Breast epithelium (tissue), 4 donors: ENCODE measurements at regions of chr3 and their contacts with region 1.

Region 1: DNA sequence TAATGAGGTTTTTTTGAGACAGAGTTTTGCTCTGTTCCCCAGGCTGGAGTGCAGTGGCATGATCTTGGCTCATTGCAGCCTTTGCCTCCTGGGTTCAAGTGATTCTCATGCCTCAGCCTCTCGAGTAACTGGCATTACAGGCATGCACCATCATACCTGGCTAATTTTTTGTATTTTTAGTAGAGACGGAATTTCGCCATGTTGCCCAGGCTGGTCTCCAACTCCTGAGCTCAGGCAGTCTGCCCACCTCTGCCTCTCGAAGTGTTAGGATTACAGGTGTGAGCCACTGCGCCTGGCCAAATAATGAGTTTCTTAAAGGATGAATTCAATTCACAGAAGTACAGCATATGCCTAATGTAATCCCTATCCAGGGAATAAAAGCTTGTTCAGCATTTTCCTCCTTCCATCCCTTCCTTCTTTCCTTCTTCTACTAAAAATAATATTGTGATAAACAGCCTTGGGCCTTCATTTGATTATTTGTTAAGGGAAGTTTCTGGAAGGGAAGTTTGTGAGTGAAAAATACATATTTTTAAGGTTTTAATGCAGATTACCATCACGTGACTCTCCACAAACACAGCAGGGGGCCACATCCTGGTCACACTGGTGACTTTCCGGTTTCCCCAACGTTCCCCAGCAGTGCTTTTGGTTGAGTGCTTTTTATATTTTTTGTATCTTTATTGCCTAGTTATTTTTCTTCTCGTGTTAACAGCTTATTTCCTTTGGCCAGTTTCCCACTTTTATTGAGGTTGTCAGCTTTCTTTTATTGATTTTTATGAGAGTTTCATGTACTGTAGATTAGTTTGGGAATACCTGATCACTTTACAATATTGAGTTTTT is 116.8 kb downstream of the USP13 start:
- DNase-seq: no peak
- H3K4me3 ChIP-seq: no peak overlapping the region
- H3K27ac ChIP-seq: no peak overlapping the region
- H3K4me1 ChIP-seq: no peaks in the 10 kb centered on the region
- H3K27me3 ChIP-seq: no peaks in the 10 kb centered on the region
- CTCF ChIP-seq: no peak
- POLR2A ChIP-seq: no peak

Region 2: DNA sequence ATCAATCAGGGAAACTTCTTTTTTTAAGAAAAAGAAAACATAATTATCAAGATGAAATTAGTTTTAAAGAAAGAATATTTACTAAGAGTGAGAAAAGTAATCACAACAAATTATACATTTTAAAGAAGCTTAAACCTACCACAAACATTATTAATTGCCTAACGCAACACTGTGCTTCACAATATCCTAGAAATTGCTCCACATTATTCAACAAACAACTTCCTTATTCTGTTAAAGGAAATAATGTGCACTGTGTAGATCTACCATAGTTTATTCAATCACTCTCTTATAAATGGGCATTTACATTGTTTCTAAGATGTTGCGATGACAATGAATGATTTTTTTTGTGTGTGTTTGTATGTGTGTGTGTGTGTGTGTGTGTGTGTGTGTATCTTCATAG is 1759.3 kb before region 1 on chr3:
- intact Hi-C with region 1: no loop called
- DNase-seq: no peak
- H3K4me3 ChIP-seq: no peak overlapping the region
- H3K27ac ChIP-seq: no peak overlapping the region
- H3K4me1 ChIP-seq: no peaks in the 10 kb centered on the region
- H3K27me3 ChIP-seq: no peaks in the 10 kb centered on the region
- CTCF ChIP-seq: no peak
- POLR2A ChIP-seq: no peak

Region 3: DNA sequence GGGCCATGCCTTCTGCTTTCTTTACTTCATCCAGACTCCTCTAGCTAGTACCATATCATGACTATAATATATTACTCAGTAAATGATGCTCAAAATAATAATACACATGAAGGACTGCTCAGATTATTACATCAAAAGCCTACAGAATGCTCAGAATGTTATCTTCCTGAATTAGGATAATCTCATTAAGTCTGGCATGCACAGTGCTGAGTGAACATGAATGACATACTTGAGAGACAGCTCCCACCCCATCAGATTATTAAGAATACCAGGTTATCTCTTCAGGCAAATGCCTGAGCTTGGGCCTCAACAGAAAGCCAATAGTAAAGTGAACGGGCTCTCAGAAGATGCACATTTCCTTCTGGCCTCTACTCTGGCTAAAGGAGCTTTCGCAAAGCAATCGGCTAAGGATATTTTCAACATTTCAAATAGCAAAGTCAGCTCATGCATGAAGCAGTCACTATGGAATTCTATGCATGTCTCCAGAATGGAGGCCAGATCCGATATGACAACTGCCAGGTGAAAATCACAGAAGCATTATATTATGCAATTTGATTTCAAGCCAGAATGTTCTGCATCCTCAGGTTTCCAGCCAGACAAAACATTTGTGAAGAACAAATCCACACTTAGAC is 1110.8 kb before region 1 on chr3:
- intact Hi-C with region 1: no loop called
- DNase-seq: no peak
- H3K4me3 ChIP-seq: no peak overlapping the region
- H3K27ac ChIP-seq: no peak overlapping the region
- H3K4me1 ChIP-seq: no peaks in the 10 kb centered on the region
- H3K27me3 ChIP-seq: no peaks in the 10 kb centered on the region
- CTCF ChIP-seq: no peak
- POLR2A ChIP-seq: no peak

Region 4: GRCh38 chr3:181288145-181288544 is 1518.5 kb after region 1 on chr3:
- intact Hi-C with region 1: loop called (anchors 5 kb)
- DNase-seq: no peak
- H3K4me3 ChIP-seq: no peak overlapping the region
- H3K27ac ChIP-seq: no peak overlapping the region
- H3K4me1 ChIP-seq: no peaks in the 10 kb centered on the region
- H3K27me3 ChIP-seq: no peaks in the 10 kb centered on the region
- CTCF ChIP-seq: no peak
- POLR2A ChIP-seq: no peak